RWPE1 (cell line): ENCODE measurements at regions of chr17 and their contacts with region 1.

Region 1: DNA sequence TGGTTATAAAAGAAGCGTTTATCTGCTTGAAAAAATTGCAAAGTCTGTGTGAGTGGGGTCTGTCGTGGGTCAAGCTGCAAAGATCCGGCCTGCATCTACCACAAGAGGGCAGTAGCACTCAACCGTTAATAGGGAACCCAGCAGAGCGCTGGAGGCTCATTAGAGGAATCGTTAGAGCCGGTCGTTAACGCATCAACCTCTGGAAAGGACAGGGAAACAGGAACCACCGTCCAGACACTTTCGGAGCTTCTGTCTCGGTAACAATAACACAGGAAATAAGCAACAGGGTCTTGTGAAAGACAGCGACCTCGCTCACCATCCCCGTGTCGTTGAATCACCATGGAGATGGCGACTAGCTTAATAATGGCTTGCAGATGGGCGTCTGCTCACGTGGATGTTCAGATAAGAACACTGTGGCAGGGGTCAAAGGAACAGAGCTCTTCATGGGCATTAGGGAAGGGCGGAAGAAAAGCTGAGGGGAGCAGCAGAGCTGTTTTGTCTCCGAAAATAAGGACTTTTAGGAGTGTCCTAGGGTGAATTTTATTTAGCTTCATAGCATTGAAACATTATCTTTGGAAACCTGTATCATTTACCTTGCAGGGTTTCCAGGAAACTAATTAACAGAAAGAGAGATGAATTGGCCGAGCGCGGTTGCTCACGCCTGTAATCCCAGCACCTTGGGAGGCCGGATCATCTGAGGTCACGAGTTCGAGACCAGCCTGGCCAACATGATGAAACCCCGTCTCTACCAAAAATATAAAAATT is 11.9 kb upstream of the NSRP1 start:
- DNase-seq: peak; percentile 73
- H3K27ac ChIP-seq: no peak overlapping the region
- CTCF ChIP-seq: peak; percentile 91

Region 2: GRCh38 chr17:29982991-29983653 is 121.6 kb before region 1 on chr17:
- CTCF ChIA-PET with region 1: no interaction called
- POLR2A ChIA-PET with region 1: no interaction called
- DNase-seq: no peak
- H3K27ac ChIP-seq: no peak overlapping the region
- CTCF ChIP-seq: no peak

Region 3: DNA sequence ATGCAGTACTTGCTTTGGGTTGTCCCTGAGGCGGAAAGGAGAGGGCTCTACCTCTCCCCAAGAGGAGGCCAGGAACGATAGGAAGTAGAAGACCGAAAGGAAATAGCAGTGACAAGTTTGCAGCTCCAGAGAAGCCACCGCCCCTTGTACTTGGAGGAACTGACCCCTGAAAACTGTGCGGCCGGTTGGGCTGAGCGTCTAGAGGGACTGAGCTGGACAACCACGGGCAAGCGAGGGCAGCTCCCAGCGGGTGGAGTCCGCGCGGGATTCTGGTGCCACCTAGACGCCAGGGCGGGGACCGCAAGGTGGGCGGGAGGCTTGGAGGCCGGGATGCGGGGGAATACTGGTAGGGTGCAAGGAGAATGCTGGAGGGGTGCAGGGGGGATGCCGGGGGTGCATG is 132.0 kb after region 1 on chr17:
- CTCF ChIA-PET with region 1: interaction called, 22 read pairs
- POLR2A ChIA-PET with region 1: no interaction called
- DNase-seq: peak; percentile 55
- H3K27ac ChIP-seq: no peak overlapping the region
- CTCF ChIP-seq: peak; percentile 42

Region 4: DNA sequence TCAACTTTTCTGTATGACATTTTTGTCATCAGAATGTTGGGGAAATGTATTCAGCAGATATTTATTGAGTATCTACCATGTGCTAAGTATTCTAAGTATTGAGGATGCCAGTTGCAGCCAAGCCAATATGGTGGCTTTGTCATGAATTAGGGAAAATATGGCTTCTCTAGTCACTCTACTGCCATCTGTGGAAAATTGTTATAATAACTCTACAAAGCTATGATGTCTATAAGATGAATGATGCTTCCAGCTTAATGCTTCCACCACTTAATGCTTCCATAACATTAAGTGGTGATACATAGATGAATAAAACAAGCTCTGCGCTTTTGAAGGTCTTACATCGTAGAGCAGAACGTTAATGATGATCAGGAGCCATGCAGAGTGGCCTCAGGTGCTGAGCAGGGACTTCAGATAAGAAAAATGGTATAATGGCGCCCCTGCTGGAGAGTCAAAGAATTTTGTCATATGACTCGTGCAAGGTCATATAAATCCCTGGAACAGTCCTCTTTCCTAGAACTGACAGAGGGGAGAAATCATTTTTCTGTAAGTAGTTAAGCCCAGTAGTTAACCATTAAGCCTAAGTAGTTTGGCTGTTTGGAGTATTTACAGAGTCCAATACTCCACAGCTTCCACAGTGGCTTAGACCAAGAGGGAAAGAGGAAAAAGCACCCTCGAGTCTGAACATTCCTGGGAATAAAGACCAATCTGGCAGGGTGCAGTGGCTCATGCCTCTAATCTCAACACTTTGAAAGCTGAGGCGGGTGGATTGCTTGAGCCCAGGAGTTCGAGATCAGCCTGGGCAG is 231.8 kb after region 1 on chr17:
- CTCF ChIA-PET with region 1: interaction called, 11 read pairs
- POLR2A ChIA-PET with region 1: no interaction called
- DNase-seq: peak; percentile 30
- H3K27ac ChIP-seq: no peak overlapping the region
- CTCF ChIP-seq: peak; percentile 59; the same call in 1 of the 2 replicates